HEK293T (cell line): ENCODE measurements at regions of chr6 and their contacts with region 1.

Region 1: DNA sequence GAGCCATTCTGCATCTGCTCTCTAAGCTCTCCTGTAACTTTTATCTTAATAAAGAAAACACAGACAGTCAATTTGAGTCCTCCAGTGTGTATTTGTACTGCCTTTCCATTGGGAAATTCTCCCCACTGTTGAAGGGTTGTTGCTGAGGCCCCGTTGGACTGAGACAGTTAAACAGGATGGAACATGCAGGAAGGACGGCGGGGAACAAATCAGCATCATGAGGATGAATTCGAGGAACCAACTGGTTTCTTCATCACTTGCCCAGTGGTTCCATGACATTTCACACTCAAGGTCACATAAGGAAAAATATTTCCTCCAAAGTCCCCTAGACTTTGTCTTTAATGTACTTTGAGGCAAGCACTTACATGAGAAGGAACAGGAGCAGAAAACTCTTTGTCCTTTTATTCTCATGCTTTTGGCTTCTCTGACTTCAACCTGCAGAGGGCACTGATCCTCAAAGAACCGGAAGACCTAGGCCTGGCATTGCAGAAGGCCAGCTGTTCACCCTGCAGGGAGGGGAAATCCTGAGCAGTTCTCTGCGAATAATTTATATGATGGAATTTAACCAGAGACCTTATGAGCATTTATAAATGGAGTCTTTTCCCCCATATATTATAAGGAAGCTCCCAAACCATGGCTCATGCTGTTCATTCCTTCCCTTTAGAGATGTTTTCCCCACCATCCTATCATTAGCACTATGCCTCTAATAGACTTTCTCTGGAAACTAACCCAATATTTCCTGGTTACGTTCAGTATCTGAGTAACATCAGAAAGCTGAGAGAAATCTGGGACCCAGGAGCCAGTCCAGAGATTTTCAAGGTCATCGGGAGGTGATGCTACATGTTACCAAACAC is 55.2 kb upstream of the ADGRF1 start:
- DNase-seq: peak; percentile 74

Region 2: DNA sequence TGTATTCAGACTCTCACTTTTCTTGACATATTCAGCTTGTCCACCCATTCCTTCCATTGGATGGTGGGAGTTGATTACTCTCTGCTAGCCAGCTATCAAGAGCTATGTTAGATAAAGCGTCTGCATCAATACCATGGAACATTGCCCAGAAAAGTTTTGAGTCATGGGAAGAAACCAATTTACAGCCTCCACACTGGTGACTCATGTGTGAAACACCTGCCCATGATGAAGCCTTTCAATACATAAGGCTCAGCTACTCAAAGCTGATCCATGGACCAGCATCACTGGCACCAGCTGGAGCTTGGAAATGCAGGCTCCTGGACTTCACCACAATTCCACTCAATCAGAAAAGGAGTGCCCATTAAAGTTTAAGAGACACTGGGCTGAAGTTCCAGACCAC is 378.2 kb before region 1 on chr6:
- CTCF ChIA-PET with region 1: no interaction called
- POLR2A ChIA-PET with region 1: no interaction called
- DNase-seq: no peak

Region 3: DNA sequence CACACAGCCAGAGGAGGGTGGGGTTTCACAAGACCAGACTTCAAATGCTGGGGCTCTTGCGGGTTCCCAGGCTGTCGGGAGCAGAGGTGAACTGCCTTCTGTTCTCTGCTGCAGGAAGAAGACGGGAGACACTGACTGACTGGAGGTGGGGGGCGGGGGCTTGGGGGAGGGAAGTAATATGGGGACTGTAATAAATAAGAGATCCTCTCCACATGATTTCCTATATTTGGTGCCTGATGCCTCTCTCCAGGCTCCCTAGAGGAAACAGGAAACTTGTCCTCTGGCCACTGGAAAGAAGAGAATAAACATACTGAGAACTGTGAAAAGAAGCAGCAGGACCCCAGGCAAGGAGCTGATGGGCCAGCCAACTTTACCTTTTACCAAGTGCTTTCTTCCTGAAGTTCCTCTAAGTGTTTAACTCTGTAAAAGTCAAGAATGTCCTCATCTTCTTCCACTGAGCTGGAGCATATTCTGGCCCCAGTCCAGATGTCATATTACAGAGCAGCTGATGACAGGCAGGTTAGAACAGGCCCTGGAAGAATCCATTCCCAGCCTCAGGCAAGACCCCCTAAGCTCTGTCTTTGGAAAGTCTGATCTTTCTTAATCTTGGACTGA is 142.4 kb before region 1 on chr6:
- CTCF ChIA-PET with region 1: no interaction called
- POLR2A ChIA-PET with region 1: no interaction called
- DNase-seq: no peak

Region 4: GRCh38 chr6:47047479-47048407 is 49.6 kb before region 1 on chr6:
- CTCF ChIA-PET with region 1: no interaction called
- POLR2A ChIA-PET with region 1: no interaction called
- DNase-seq: peak; percentile 62

Region 5: GRCh38 chr6:47309291-47310130 is 212.2 kb after region 1 on chr6 and contains the start of gene TNFRSF21:
- CTCF ChIA-PET with region 1: interaction called, 10 read pairs
- POLR2A ChIA-PET with region 1: interaction called, 11 read pairs
- DNase-seq: peak; percentile 92